Activated CD8-positive, alpha-beta memory T cell treated with anti-CD3 and anti-CD28 coated beads, Interleukin-2, amount 10 ng/mL, durations not matched to agents 7 days and 5 days (primary cell): ENCODE measurements at regions of chr14 and their contacts with region 1.

Region 1: DNA sequence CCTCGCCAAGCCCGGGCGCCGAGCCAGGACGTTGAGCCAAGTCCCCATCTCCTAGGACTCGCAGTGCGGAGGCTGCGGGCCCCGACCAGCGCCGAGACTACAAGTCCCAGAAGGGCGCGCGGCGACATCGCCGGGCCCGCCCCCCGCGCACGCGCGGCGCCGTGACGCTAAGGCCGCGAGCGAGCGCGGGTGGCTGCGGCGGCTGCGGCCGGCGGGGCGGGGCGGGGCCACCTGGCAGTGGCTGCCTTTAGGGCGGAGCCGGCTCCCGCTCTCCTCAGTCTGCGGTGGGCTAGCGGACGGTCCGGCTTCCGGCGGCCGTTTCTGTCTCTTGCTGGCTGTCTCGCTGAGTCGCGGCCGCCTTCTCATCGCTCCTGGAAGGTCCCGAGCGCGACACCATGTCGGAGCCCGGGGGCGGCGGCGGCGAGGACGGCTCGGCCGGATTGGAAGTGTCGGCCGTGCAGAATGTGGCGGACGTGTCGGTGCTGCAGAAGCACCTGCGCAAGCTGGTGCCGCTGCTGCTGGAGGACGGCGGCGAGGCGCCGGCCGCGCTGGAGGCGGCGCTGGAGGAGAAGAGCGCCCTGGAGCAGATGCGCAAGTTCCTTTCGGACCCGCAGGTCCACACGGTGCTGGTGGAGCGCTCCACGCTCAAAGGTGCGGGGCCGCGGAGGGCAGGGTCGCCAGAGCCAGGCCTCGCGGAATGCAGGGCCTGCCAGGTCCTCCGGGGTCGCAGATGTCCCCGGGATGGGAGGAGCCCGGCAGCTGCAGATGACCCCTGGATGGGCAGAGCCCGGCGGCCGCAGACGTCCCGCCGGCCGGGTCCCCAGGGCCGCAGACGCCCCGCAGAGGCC is at the start of gene DYNC1H1:
- DNase-seq: peak; percentile 92
- ATAC-seq: peak; percentile 86
- H3K4me3 Mint-ChIP-seq: peak within 1 kb of the TSS; percentile 88
- H3K27ac Mint-ChIP-seq: peak within 1 kb of the TSS; percentile 92
- H3K4me1 Mint-ChIP-seq: peaks cover 47% of the 10 kb centered on the region
- H3K27me3 Mint-ChIP-seq: peaks cover 2% of the 10 kb centered on the region
- total RNA-seq, gene DYNC1H1: 308 to 325 TPM

Region 2: DNA sequence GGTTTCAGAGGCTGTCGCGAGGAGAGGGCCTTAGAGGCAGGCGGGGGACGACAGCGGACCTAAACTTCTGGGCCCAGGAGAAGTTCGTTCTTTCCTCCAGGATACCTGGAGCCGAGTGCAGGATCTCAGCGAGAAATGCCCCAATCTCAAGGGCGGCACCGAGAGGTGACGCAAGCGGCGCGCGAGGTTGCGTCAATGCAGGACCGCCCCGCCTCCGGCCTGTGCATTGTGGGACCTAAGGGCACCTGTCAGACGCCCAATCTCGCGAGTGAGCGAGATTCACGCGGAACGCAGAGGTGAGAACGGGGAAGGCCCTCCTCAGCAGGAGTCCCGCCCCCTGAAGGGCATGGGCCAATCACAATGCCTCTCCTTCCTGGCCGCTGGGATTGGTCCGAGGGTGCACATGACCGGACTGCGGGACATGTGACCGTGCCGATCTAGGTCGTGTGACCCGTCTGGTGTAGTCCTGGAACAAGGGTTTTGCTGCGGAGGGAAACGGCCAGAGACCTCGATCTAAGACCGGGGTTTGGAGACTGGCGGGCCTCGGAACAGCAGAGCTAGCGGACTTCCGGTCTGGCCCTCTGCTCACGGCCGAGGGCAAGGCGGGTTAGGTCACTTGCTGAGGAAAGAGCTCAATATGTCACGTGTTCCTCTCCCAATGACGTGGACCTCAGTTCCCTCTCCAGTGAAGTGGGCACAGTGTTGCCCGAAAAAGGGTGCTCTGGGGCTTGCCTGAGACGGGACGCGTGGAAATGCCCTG is 16.4 kb before region 1 on chr14:
- CTCF ChIA-PET with region 1: interaction called, 22 read pairs
- DNase-seq: peak; percentile 100
- ATAC-seq: peak; percentile 98
- H3K4me3 Mint-ChIP-seq: peak overlapping the region; percentile 84
- H3K27ac Mint-ChIP-seq: peak overlapping the region; percentile 94
- H3K4me1 Mint-ChIP-seq: peaks cover 15% of the 10 kb centered on the region
- H3K27me3 Mint-ChIP-seq: peaks cover 24% of the 10 kb centered on the region